ENCODE measurements at regions of chr14 and their contacts with region 1.

Region 1: DNA sequence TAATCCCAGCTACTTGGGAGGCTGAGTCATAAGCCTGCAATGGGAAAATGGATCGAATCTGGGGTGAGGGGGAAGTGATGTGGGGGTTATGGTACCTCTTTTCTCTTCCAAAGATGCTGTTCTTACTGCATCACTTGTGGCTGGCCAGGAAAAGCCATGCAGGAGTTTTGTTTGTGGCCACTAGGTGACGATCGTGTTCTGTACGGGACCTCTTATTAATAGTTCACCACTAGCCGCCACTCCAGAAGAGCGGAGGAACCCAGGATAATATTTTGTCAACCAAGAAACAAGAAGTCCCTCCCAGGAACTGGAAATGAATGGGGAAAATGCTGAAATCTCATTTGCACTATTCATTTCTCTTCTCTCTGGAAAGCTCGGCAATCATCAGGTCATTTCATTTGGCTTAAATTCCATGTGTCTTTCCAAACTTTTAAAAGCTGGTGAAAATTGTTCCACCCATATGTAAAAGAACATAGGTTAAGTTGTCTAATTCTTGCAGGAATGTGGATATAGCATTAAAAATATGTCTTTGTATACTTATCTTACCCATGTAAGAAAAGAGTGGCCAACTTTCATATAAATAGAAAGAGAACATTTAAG is 8.9 kb downstream of the GPR65 start:
- DNase-seq: peak; percentile 76
- H3K4me3 ChIP-seq: no peak overlapping the region
- H3K27ac ChIP-seq: no peak overlapping the region
- H3K4me1 ChIP-seq: no peaks in the 10 kb centered on the region
- H3K27me3 ChIP-seq: peaks cover 8% of the 10 kb centered on the region
- CTCF ChIP-seq: peak; percentile 78

Region 2: DNA sequence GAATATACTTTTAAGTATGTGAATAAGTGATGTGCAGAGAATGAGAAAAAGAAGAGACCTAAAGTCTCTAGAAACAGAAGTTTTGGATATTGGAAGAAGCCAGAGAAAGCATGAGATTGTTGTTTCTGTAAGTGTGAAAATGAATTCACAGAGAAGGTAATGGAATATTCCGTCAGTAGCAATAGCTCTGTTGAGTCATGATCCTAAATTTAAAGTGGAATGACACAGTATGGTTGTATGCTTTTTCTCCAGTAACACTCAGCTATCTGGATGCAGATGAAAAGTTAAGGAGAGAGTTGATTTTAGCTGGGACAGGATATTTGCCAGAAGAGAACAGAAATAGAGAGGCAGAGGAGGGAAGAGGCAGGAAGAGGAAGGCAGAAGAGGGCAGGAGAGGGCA is 1187.2 kb before region 1 on chr14:
- CTCF ChIA-PET with region 1: no interaction called
- POLR2A ChIA-PET with region 1: no interaction called
- intact Hi-C with region 1: no loop called
- DNase-seq: no peak
- H3K4me3 ChIP-seq: no peak overlapping the region
- H3K27ac ChIP-seq: no peak overlapping the region
- H3K4me1 ChIP-seq: no peaks in the 10 kb centered on the region
- H3K27me3 ChIP-seq: no peaks in the 10 kb centered on the region
- CTCF ChIP-seq: no peak

Region 3: GRCh38 chr14:87725318-87725717 is 288.5 kb before region 1 on chr14:
- CTCF ChIA-PET with region 1: no interaction called
- POLR2A ChIA-PET with region 1: no interaction called
- intact Hi-C with region 1: no loop called
- DNase-seq: no peak
- H3K4me3 ChIP-seq: no peak overlapping the region
- H3K27ac ChIP-seq: no peak overlapping the region
- H3K4me1 ChIP-seq: no peaks in the 10 kb centered on the region
- H3K27me3 ChIP-seq: no peaks in the 10 kb centered on the region
- CTCF ChIP-seq: no peak

Region 4: DNA sequence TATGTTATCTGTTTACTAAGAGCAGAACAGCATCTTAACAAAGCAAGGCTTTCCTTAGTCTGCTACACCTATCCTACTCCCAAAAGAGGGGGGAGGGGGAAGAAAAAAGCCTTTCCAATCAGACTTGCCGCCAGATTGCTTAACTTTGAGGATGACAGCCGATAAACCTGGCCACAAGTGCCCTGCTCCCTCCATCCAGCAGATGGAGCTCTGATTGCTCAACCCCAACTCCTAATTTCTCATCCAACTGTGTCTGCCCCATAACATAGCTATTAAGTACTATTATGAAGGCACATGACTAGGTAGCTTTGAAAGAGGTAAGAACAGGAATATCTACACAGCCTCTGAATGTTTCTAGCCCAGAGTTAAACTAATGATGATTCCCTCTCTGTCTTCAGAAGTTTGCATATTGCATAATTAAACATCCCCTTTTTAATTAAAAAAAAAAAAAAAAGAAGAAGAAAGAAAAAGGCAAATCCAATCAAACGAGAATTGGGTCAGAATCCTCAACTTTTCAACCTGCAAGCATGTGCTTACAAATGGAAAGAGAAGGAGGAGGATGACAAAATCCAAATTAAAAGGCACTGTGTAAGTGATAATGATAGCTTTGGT is 268.2 kb before region 1 on chr14:
- CTCF ChIA-PET with region 1: no interaction called
- POLR2A ChIA-PET with region 1: no interaction called
- intact Hi-C with region 1: no loop called
- DNase-seq: peak; percentile 54
- H3K4me3 ChIP-seq: no peak overlapping the region
- H3K27ac ChIP-seq: no peak overlapping the region
- H3K4me1 ChIP-seq: no peaks in the 10 kb centered on the region
- H3K27me3 ChIP-seq: no peaks in the 10 kb centered on the region
- CTCF ChIP-seq: peak; percentile 68

Region 5: GRCh38 chr14:88168498-88169165 is 154.8 kb after region 1 on chr14:
- CTCF ChIA-PET with region 1: interaction called, 26 read pairs
- POLR2A ChIA-PET with region 1: no interaction called
- intact Hi-C with region 1: loop called (anchors 1 kb)
- DNase-seq: peak; percentile 68
- H3K4me3 ChIP-seq: no peak overlapping the region
- H3K27ac ChIP-seq: no peak overlapping the region
- H3K4me1 ChIP-seq: no peaks in the 10 kb centered on the region
- H3K27me3 ChIP-seq: no peaks in the 10 kb centered on the region
- CTCF ChIP-seq: peak; percentile 77

Region 6: GRCh38 chr14:88233915-88234314 is 220.1 kb after region 1 on chr14:
- CTCF ChIA-PET with region 1: no interaction called
- POLR2A ChIA-PET with region 1: no interaction called
- intact Hi-C with region 1: loop called (anchors 5 kb)
- DNase-seq: peak; percentile 38
- H3K4me3 ChIP-seq: no peak overlapping the region
- H3K27ac ChIP-seq: no peak overlapping the region
- H3K4me1 ChIP-seq: no peaks in the 10 kb centered on the region
- H3K27me3 ChIP-seq: peaks cover 6% of the 10 kb centered on the region
- CTCF ChIP-seq: peak; percentile 53

Region 7: GRCh38 chr14:88380405-88380804 is 366.6 kb after region 1 on chr14:
- CTCF ChIA-PET with region 1: interaction called, 4 read pairs
- POLR2A ChIA-PET with region 1: no interaction called
- intact Hi-C with region 1: loop called (anchors 10 kb)
- DNase-seq: peak; percentile 3
- H3K4me3 ChIP-seq: no peak overlapping the region
- H3K27ac ChIP-seq: no peak overlapping the region
- H3K4me1 ChIP-seq: peaks cover 6% of the 10 kb centered on the region
- H3K27me3 ChIP-seq: peaks cover 12% of the 10 kb centered on the region
- CTCF ChIP-seq: peak; percentile 42